PC-9 (cell line): ENCODE measurements at regions of chr5 and their contacts with region 1.

Region 1: GRCh38 chr5:149141224-149141956 is at the start of gene ABLIM3:
- DNase-seq: peak; percentile 54 to 91
- H3K4me3 ChIP-seq: peak within 1 kb of the TSS; percentile 97
- H3K27ac ChIP-seq: peak within 1 kb of the TSS; percentile 91
- H3K4me1 ChIP-seq: peaks cover 61% of the 10 kb centered on the region
- H3K27me3 ChIP-seq: no peaks in the 10 kb centered on the region
- CTCF ChIP-seq: peak; percentile 90
- total RNA-seq, gene ABLIM3: 101 and 111 TPM in 2 replicates

Region 2: DNA sequence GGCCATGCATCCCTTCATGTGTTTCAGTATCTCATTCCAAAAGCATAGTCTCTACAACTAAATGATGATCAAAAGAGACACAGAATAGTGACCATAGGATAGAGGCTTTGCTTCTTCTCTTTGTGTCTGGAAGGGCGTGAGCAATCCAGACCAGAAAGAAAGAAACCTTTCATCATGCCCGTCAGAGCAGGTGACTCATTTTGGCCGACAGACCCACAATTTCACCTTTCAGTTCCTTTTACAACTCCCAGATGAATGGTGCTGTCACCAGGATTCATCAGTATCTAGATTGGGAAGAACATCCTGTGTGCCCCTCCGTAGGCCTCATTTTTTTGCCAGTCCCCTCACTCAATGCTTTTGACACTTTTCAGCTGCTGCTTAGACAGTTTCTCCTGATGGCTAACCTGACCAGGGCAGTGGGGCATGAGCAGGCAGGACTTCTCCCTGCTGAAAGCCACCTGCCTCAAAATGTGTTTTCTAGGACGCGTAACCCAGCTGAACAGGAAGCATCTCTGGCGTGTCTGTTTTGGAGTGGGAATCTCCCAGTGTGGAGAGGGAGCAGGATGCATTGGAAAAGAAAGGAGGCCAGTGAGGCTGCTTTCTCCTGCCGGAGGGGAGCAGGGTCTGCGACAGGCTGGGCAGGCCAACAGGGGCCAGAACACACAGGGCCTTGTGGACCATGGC is 21.2 kb after region 1 on chr5:
- CTCF ChIA-PET with region 1: interaction called, 12 read pairs
- POLR2A ChIA-PET with region 1: interaction called, 7 read pairs
- intact Hi-C with region 1: no loop called
- DNase-seq: peak; percentile 48 to 60
- H3K4me3 ChIP-seq: no peak overlapping the region
- H3K27ac ChIP-seq: peak overlapping the region; percentile 75
- H3K4me1 ChIP-seq: peaks cover 28% of the 10 kb centered on the region
- H3K27me3 ChIP-seq: no peaks in the 10 kb centered on the region
- CTCF ChIP-seq: no peak

Region 3: GRCh38 chr5:149195337-149195887 is 54.0 kb after region 1 on chr5:
- CTCF ChIA-PET with region 1: no interaction called
- POLR2A ChIA-PET with region 1: no interaction called
- intact Hi-C with region 1: loop called (anchors 2 kb)
- DNase-seq: no peak
- H3K4me3 ChIP-seq: no peak overlapping the region
- H3K27ac ChIP-seq: no peak overlapping the region
- H3K4me1 ChIP-seq: 0 out of 2 replicates have a peak, but pooled peaks cover 4% of the 10 kb centered on the region
- H3K27me3 ChIP-seq: no peaks in the 10 kb centered on the region
- CTCF ChIP-seq: no peak

Region 4: DNA sequence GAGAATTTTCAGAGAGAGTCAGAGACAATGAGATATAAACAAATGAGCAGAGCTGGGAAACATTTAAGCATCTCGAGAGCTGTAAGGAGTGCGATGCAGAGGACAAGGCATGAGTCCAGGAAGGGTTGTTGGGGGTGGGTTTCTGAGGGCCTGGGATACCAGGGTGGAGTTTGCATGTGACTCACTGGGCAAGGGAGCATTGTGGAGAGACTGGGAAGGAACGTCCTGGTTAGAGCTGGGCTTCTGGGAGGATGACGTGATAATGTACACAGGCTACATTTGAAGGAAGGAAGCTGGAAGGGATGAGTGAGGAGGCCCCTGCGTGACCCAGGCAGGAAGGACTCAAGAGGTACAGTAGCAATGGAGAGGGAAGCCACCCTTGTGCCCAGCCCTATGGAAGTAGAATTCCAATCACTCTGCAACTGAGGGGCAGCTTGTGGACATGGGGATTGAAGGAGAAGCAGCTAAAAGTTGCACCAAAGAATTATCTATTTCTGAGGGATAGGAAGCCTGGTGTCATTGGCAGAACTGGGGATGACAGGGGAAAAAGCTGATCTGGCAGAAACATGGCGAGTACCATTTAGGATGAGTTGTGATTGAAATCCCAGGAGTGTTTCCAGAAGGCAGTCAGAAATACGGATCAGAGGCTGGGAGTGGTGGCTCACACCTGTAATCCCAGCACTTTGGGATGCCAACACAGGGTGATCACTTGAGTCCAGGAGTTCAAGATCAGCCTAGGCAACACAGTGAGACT is 71.0 kb after region 1 on chr5:
- CTCF ChIA-PET with region 1: no interaction called
- POLR2A ChIA-PET with region 1: no interaction called
- intact Hi-C with region 1: loop called (anchors 2 kb)
- DNase-seq: peak in 1 of 2 experiments; percentile 57
- H3K4me3 ChIP-seq: no peak overlapping the region
- H3K27ac ChIP-seq: no peak overlapping the region
- H3K4me1 ChIP-seq: peaks cover 9% of the 10 kb centered on the region; the same call in 1 of the 2 replicates
- H3K27me3 ChIP-seq: no peaks in the 10 kb centered on the region
- CTCF ChIP-seq: no peak

Region 5: DNA sequence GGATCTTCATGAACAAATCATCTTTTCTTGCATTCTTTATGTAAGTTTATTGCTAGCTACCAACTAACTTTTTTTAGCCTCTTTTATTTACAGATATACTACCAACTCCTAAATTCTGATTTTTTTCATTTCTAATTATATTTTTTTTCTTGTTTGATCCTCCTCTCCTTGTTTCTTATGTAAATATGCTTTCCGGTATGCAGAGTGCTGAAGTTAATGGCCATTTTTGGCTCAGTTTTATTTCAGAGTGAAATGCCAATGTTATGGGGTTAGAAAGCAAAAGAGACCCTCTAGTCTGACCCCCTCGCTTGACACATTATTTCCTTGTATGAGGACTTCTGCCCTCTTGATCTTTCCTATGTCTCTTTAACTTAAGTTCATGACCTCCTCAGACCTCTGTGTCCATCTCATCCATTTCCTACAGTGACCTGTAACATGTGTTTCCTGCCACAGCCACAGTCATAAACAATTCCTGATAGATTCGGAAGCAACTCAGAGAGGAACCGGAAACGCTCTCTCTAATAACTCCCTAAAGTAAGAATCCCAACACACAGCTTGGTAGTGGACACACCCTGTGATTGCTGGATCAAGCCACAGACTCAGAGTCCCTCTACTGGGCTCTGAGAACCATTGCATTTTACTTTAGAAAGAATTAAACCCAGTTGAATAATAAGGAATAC is 87.4 kb after region 1 on chr5:
- CTCF ChIA-PET with region 1: no interaction called
- POLR2A ChIA-PET with region 1: interaction called, 5 read pairs
- intact Hi-C with region 1: loop called (anchors 1 kb)
- DNase-seq: peak; percentile 40 to 53
- H3K4me3 ChIP-seq: no peak overlapping the region
- H3K27ac ChIP-seq: no peak overlapping the region
- H3K4me1 ChIP-seq: peaks cover 18% of the 10 kb centered on the region
- H3K27me3 ChIP-seq: no peaks in the 10 kb centered on the region
- CTCF ChIP-seq: peak; percentile 68

Region 6: DNA sequence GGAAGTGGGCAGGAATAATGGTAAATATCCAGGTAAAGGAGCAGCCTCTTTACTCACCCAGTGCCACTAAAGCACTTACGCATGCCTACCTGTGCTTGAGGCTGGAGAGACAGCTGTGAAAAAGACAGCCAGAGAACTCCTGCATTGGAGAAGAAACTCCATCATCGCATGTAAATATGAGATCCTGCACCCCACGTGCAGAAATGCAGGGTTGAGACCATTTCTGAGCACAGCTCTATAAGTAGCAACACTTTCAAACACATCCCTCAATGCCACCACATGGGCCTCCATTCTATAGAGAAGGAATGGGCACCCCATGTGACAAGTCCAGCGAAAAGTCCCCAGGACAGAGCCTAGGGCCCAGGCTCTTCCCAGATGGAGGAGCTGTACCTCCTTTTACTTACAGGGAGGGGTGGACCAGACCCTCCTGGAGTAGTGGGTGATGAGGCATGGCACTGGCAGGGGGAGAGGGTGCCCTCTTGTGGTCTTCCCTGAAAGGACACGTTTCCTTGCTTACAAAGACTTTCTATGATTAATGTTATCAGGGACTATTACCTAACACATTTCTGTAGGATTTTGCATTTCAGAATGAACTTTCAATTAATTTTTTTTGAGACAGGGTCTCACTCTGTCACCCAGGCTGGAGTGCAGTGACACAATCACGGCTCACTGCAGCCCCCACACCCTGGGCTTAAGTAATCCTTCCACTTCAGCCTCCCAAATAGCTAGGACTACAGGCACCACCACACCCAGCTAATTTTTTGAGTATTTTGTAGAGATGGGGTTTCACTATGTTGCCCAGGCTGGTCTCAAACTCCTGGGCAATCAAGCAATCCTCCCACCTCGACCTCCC is 293.0 kb after region 1 on chr5:
- CTCF ChIA-PET with region 1: no interaction called
- POLR2A ChIA-PET with region 1: no interaction called
- intact Hi-C with region 1: loop called (anchors 5 kb)
- DNase-seq: peak in 1 of 2 experiments; percentile 59
- H3K4me3 ChIP-seq: no peak overlapping the region
- H3K27ac ChIP-seq: no peak overlapping the region
- H3K4me1 ChIP-seq: peaks cover 11% of the 10 kb centered on the region
- H3K27me3 ChIP-seq: no peaks in the 10 kb centered on the region
- CTCF ChIP-seq: peak; percentile 93